ENCODE measurements at regions of chr2 and their contacts with region 1.

Region 1: GRCh38 chr2:2769481-2770431 is 438.7 kb upstream of the MYT1L start:
- DNase-seq: peak; percentile 90

Region 2: DNA sequence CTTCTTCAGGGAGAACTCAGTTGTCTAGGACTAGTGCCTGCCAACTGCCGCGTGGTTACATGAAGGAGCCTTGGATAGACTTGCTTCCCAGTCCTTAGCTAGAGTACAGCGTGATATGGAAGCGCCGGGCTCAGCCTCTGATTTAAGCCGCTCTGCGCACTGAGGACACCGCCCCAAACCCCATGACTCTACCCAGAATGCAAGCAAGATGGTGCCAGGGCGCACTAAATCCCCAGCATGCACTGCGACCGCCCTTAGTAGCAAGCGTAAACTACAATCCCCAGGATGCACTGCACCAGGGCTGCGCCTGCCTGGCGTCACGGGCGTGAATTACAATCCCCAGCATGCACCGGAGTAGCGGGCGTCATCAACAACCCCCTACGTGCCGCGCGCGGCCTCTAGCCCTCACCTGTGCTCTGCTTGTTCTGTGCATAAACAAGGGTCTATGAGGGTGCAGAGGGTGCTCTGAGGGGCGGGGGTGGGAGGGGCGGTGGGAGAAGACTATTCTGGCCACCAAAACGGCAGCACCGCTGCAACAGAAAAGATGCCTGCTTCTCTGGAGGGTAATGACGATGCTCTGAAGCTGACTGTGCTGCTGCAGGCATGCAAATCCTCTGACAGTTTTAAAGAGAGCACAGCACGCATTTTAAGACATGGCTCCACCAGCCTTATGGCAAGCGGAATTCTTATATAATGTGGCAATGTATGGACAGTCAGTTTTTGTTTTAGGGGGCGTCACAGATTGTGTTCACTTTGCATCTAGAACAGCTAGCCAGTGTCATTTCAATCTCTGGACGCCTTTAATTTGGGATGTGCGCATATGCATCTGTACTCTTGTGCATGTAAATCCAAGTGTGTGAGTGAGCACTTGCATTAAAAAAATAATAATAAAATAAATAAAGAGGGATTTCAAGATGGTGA is 156.2 kb before region 1 on chr2:
- intact Hi-C with region 1: loop called (anchors 5 kb)
- DNase-seq: peak; percentile 93

Region 3: DNA sequence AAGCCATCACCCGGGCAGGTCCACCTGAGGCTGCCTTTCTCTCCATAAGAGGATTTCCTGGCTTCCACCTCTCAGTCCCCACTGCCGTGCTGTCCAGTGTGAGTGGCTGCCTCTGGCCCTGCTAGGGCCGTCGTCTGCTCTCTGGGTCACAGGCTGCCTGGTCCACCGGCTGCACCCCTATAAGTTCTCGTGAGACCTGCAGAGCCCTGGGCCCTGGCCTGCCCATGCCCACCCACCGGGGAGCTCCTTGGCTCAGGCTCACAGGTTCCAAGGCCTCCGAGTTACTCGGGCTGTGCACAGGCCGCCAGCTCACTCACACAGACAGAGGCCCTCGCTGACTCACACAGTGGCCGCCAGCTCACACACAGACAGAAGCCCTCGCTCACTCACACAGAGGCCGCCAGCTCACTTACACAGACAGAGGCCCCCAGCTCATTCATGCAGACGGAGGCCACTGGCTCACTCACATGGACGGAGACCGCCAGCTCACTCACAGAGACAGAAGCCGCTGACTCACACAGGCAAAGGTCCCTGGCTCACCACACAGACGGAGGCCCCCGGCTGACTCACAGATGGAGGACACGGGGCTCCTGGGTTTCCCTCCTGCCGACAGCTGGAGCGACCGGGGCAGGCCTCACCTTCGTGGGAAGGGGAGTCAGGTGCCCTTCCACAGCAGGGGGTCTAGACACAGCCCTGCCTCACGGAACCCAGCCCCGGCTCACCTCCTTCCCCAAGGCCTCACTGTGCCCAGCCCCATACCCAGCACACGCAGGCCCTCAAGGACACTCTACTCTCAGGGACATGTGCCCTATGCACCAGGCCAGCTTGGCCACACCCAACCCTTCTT is 104.5 kb before region 1 on chr2:
- intact Hi-C with region 1: loop called (anchors 5 kb)
- DNase-seq: peak; percentile 76

Region 4: DNA sequence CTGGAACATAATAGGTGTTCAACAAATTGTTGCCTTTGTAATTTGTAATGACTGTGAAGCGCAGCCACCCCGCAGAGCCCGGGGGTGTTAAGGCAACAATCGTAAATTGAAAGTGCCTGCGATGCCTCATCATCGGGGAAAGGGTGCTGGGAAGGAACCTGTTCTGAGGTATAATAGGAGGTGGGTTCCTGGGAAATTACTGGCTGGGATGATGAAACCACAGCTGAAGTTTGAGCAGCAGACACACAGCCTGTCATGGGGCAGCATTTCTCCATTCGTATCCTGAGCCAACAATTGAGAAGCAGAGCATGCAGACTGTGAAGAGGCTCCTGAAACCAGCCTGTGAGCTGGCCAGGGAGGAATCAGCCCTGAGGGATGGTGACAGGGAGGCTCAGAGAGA is 34.7 kb before region 1 on chr2:
- intact Hi-C with region 1: no loop called
- DNase-seq: no peak

Measured in cardiac septum (tissue), 1 donor.